ENCODE measurements at regions of chr14 and their contacts with region 1.

Region 1: GRCh38 chr14:28754209-28754985 is 12.2 kb upstream of the FOXG1 start:
- DNase-seq: peak; percentile 40 to 57
- ATAC-seq: peak; percentile 75 to 85; a peak in 4 of 6 replicates
- H3K4me3 ChIP-seq: no peak overlapping the region
- H3K27ac ChIP-seq: no peak overlapping the region
- H3K4me1 ChIP-seq: no peaks in the 10 kb centered on the region
- CTCF ChIP-seq: peak; percentile 81
- EP300 ChIP-seq: no peak
- POLR2A ChIP-seq: no peak
- RAD21 ChIP-seq: peak; percentile 79 to 84

Region 2: DNA sequence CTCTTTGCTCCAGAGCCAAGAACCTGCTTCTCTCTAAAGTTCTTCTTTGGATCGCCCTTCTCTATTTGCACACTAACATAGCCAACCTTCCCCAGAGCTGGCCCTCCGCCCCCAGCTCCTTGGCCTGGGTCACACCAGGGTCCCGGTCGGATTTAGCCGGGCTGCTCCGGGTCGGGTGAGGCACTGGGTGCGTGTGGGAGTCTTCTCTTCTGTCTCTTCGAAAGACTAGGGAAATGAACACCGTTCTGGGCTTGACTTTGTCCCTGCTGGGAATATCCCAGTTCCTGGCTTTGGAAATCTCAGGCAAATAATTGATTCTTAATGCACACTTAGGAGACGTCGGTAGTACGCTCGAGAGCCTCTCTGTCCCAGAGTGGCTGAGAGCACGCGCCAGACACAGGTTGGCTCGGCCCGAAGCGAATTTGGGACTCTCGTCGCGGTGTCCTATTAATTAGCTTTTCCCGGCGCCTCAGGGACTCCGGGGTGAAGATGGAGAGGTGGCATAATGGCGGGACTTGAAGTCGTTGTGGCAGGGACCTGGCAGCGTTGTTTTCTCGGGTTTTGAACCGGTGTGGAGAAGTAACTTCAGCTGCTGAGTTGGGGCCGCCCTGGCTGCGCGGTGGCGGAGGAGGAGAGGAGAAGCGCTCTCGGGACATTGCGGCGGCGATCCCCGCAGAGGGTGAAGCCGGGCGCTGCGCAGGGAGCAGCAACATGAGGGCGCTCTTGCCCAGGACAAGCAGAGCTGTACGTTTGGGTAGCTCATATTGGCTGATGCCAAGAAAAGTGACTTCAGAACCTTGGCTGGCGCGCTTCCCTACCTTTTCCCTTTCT is 19.7 kb after region 1 on chr14:
- CTCF ChIA-PET with region 1: interaction called, 17 read pairs
- POLR2A ChIA-PET with region 1: no interaction called
- DNase-seq: peak in 1 of 2 experiments; percentile 43
- ATAC-seq: peak; percentile 88 to 92; a peak in 5 of 6 replicates
- H3K4me3 ChIP-seq: peak overlapping the region; percentile 24; the same call in 2 of the 3 replicates
- H3K27ac ChIP-seq: no peak overlapping the region
- H3K4me1 ChIP-seq: no peaks in the 10 kb centered on the region
- CTCF ChIP-seq: no peak; the same call in 2 of the 3 replicates
- EP300 ChIP-seq: no peak
- POLR2A ChIP-seq: no peak
- RAD21 ChIP-seq: peak; percentile 49 to 50

Region 3: GRCh38 chr14:29536886-29537511 is 782.6 kb after region 1 on chr14:
- CTCF ChIA-PET with region 1: interaction called, 21 read pairs
- POLR2A ChIA-PET with region 1: no interaction called
- DNase-seq: peak in 1 of 2 experiments; percentile 18
- ATAC-seq: no peak
- H3K4me3 ChIP-seq: no peak overlapping the region
- H3K27ac ChIP-seq: no peak overlapping the region
- H3K4me1 ChIP-seq: no peaks in the 10 kb centered on the region
- CTCF ChIP-seq: peak; percentile 62
- EP300 ChIP-seq: no peak
- POLR2A ChIP-seq: no peak
- RAD21 ChIP-seq: peak; percentile 49 to 62; a peak in 4 of 5 replicates

Region 4: DNA sequence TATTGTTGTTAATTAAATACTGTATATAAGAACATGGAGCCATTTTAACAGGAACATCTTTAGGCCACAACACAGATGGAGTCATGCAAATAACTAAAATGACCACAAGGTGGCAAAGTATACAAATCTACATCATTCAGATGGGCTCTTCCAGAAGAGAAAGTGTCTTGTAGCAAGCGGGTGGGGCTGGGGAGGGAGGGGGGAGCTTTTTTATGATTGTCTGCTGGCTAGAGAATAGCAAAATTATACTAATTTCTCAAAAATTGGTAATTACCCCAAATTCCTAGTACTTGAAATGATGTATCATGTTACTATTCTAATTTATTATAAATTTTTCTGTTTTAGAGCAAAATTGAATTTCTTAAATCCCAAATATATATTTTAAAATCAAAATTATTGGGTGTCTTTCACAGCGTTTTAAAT is 794.6 kb after region 1 on chr14:
- CTCF ChIA-PET with region 1: interaction called, 13 read pairs
- POLR2A ChIA-PET with region 1: no interaction called
- DNase-seq: peak; percentile 38 to 68
- ATAC-seq: peak; percentile 88 to 89
- H3K4me3 ChIP-seq: no peak overlapping the region
- H3K27ac ChIP-seq: no peak overlapping the region
- H3K4me1 ChIP-seq: no peaks in the 10 kb centered on the region
- CTCF ChIP-seq: peak; percentile 67
- EP300 ChIP-seq: no peak
- POLR2A ChIP-seq: no peak
- RAD21 ChIP-seq: peak; percentile 65 to 75

Measured in A549 (cell line).